Stomach (tissue), 19 donors: ENCODE measurements at regions of chr2 and their contacts with region 1.

Region 1: GRCh38 chr2:39124000-39124745 is 3.3 kb upstream of the SOS1 start:
- DNase-seq: peak; percentile 97 to 99
- H3K4me3 ChIP-seq: peak overlapping the region; percentile 59 to 75 (median 70)
- H3K27ac ChIP-seq: peak overlapping the region; percentile 95 to 98 (median 97)
- H3K4me1 ChIP-seq: peaks cover 22 to 55% (median 38%) of the 10 kb centered on the region in 4 donors
- H3K27me3 ChIP-seq: no peaks in the 10 kb centered on the region
- CTCF ChIP-seq: peak in 4 of 7 experiments; percentile 26 to 66 (median 35)
- EP300 ChIP-seq: no peak
- POLR2A ChIP-seq: peak in 1 of 4 donors; percentile 68

Region 2: DNA sequence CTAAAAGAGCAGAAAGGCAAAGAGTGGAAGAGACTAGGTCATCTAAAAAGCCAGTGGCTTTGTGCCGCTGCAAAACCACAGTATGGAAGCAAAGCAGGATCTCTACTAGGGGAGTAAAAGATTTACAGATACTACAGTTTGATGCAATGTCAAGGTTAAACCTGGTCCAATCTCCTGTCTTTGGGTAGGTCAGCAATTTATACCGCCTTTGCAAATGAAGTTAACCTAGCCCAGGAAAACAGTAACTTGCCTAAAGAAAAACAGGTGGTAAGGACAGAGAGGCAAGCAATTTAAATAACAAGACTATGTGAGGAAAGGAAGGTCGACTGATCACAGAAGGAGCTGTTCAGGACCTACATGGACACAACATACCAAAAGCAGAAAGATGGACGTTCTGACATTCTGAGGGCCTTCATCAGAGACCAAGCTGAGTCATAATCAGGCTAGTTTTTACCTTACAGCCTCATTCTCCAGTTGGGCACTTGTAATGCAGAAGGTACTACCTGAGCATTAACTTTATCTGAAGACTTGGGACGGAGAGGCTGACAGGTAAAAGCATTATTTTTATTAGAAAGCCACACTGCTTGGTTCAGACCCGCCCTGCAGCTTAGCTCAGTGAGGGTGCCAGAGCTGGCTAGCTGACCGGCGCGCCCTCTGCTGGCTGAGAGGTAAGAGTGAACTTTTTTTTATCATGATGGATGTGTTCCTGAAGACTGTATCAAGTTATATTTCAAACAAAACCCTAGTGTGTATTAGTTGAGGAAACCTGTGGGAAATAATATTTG is 103.6 kb after region 1 on chr2:
- intact Hi-C with region 1: loop called (anchors 10 kb)
- DNase-seq: peak; percentile 87 to 94
- H3K4me3 ChIP-seq: peak overlapping the region in 3 of 4 donors; percentile 8 to 21 (median 18)
- H3K27ac ChIP-seq: no peak overlapping the region
- H3K4me1 ChIP-seq: peaks cover 5 to 24% (median 12%) of the 10 kb centered on the region in 4 donors
- H3K27me3 ChIP-seq: no peaks in the 10 kb centered on the region
- CTCF ChIP-seq: peak in 5 of 7 experiments; percentile 49 to 87 (median 81)
- EP300 ChIP-seq: no peak
- POLR2A ChIP-seq: no peak